ENCODE measurements at regions of chr1 and their contacts with region 1.

Region 1: GRCh38 chr1:25538191-25538761 is 5.1 kb upstream of the LDLRAP1 start:
- DNase-seq: no peak
- ATAC-seq: no peak
- H3K4me3 ChIP-seq: no peak overlapping the region
- H3K4me3 Mint-ChIP-seq: no peak overlapping the region
- H3K27ac ChIP-seq: no peak overlapping the region
- H3K27ac Mint-ChIP-seq: peak overlapping the region in 5 of 9 donors; percentile 0 to 49 (median 20)
- H3K4me1 ChIP-seq: peaks cover 0 to 4% of the 10 kb centered on the region in 2 donors
- H3K4me1 Mint-ChIP-seq: peaks cover 3 to 12% (median 8%) of the 10 kb centered on the region in 7 donors
- H3K27me3 ChIP-seq: no peaks in the 10 kb centered on the region
- H3K27me3 Mint-ChIP-seq: peaks cover 0 to 33% (median 0%) of the 10 kb centered on the region in 5 donors

Region 2: GRCh38 chr1:25487628-25488027 is 50.6 kb before region 1 on chr1:
- CTCF ChIA-PET with region 1: no interaction called
- POLR2A ChIA-PET with region 1: no interaction called
- intact Hi-C with region 1: no loop called
- DNase-seq: peak in 6 of 9 donors; percentile 30 to 48 (median 38)
- ATAC-seq: no peak
- H3K4me3 ChIP-seq: no peak overlapping the region
- H3K4me3 Mint-ChIP-seq: no peak overlapping the region
- H3K27ac ChIP-seq: no peak overlapping the region
- H3K27ac Mint-ChIP-seq: peak overlapping the region in 2 of 9 donors; percentile 7 to 65
- H3K4me1 ChIP-seq: no peaks in the 10 kb centered on the region
- H3K4me1 Mint-ChIP-seq: peaks cover 0 to 26% (median 17%) of the 10 kb centered on the region in 7 donors
- H3K27me3 ChIP-seq: no peaks in the 10 kb centered on the region
- H3K27me3 Mint-ChIP-seq: no peaks in the 10 kb centered on the region

Region 3: DNA sequence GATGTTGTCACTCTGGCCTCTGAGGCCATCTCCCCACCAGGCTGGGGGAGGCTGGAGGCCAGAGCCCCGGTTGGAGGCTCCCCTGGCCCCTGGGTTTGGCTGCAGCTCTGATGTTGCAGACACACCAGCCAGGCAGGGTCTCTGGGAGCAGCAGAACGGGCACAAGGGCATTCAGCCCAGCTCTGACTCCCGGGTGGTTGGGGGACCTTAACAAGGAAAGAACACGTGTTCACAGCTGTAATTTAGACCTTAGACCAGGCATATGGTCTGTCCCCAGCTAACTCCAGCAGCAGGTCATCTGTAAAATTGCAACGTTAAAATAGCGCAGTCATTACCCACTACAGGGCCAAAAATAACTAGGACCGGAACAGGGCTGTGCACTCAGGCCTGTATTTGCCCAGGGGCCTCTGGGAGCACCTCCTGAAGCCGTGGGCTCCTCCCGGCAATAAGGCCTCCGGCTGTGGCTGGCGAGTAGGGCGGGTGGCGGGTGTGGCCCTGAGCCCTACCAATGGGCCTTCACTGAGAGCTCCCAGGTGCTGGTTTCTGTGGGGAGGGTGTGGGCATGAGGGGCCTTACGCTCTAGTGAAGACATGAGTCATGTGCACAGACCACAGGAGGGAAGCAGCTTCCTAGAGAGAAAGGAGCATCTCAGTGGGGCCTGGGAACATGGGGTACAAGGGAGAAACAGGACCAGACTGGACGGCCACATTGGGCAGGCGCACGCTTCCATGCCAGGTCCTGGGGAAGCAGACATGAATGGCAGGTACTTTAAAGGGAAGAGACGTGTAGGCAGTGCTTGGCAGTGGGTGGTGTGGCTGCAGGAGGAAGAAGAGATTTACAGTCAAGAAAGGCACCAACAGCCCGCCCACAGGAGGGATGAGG is 11.2 kb after region 1 on chr1:
- CTCF ChIA-PET with region 1: interaction called, 4 read pairs
- POLR2A ChIA-PET with region 1: interaction called, 442 read pairs
- intact Hi-C with region 1: no loop called
- DNase-seq: peak in 8 of 9 donors; percentile 54 to 81 (median 66)
- ATAC-seq: peak; percentile 96
- H3K4me3 ChIP-seq: peak overlapping the region; percentile 48
- H3K4me3 Mint-ChIP-seq: peak overlapping the region; percentile 74 to 87 (median 85)
- H3K27ac ChIP-seq: peak overlapping the region; percentile 77
- H3K27ac Mint-ChIP-seq: peak overlapping the region; percentile 89 to 98 (median 96)
- H3K4me1 ChIP-seq: peaks cover 77 to 94% of the 10 kb centered on the region in 2 donors
- H3K4me1 Mint-ChIP-seq: peaks cover 62 to 100% (median 92%) of the 10 kb centered on the region in 7 donors
- H3K27me3 ChIP-seq: no peaks in the 10 kb centered on the region
- H3K27me3 Mint-ChIP-seq: peaks cover 0 to 1% (median 0%) of the 10 kb centered on the region in 5 donors

Measured in naive thymus-derived CD4-positive, alpha-beta T cell (primary cell).